ENCODE measurements at regions of chr2 and their contacts with region 1.

Region 1: DNA sequence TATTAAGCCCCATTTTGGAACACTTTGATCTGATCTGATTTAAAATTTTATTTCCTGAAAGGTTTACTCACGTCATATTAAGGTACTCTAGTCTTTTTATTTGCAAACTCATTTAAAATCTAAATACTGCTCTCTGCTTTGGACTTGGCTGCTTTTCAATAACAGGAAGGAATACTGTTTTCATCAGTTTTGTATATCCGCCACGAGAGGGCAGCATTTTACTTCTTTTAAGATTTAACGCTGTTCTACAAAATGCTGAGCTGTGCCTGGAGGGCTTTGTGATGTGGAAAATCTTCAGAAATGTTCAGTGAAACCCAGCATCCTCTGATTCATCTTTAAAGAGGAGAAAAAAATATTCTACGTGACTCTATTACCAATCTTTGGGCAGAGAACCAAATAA is 37.5 kb upstream of the SLC38A11 start:
- DNase-seq: peak; percentile 32 to 56 (median 46)
- H3K4me3 ChIP-seq: no peak overlapping the region
- H3K4me3 Mint-ChIP-seq: no peak overlapping the region
- H3K27ac ChIP-seq: no peak overlapping the region
- H3K27ac Mint-ChIP-seq: no peak overlapping the region
- H3K4me1 ChIP-seq: no peaks in the 10 kb centered on the region
- H3K4me1 Mint-ChIP-seq: peaks cover 7% of the 10 kb centered on the region
- H3K27me3 ChIP-seq: no peaks in the 10 kb centered on the region
- H3K27me3 Mint-ChIP-seq: peaks cover 0 to 1% (median 0%) of the 10 kb centered on the region in 3 donors
- CTCF ChIP-seq: peak; percentile 71

Region 2: DNA sequence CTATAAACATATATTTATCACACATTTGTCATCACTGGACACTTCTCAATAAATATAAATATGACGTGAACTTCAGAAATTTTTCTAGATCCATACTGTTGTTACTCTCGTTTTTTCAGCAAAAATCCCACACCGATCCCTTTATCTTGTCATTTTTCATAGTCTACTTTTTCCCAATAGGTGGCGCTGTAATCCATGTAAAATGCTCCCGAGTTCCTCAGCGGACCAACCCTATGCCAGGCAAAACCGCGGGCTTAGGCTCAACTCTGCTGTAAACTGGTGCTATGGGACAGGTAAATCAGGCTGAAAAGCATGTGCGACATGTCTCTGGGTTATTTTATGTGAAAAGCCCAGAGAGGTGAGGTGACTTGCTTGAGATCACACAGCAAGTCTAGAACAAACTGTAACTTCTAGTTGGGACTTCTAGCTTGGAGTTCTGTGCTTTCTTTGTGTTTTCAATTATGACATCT is 255.2 kb before region 1 on chr2:
- intact Hi-C with region 1: loop called in 1 of 2 experiments (anchors 10 kb)
- DNase-seq: peak; percentile 42 to 62 (median 61)
- H3K4me3 ChIP-seq: no peak overlapping the region
- H3K4me3 Mint-ChIP-seq: peak overlapping the region in 1 of 2 donors; percentile 13
- H3K27ac ChIP-seq: no peak overlapping the region
- H3K27ac Mint-ChIP-seq: no peak overlapping the region
- H3K4me1 ChIP-seq: no peaks in the 10 kb centered on the region
- H3K4me1 Mint-ChIP-seq: peaks cover 8% of the 10 kb centered on the region
- H3K27me3 ChIP-seq: no peaks in the 10 kb centered on the region
- H3K27me3 Mint-ChIP-seq: peaks cover 0 to 3% (median 0%) of the 10 kb centered on the region in 3 donors
- CTCF ChIP-seq: peak; percentile 81

Region 3: GRCh38 chr2:164808776-164809175 is 184.0 kb before region 1 on chr2:
- intact Hi-C with region 1: no loop called
- DNase-seq: no peak
- H3K4me3 ChIP-seq: no peak overlapping the region
- H3K4me3 Mint-ChIP-seq: no peak overlapping the region
- H3K27ac ChIP-seq: no peak overlapping the region
- H3K27ac Mint-ChIP-seq: no peak overlapping the region
- H3K4me1 ChIP-seq: peaks cover 0 to 6% of the 10 kb centered on the region in 2 donors
- H3K4me1 Mint-ChIP-seq: peaks cover 3% of the 10 kb centered on the region
- H3K27me3 ChIP-seq: no peaks in the 10 kb centered on the region
- H3K27me3 Mint-ChIP-seq: no peaks in the 10 kb centered on the region
- CTCF ChIP-seq: no peak